Aorta (tissue), 5 donors: ENCODE measurements at regions of chr4 and their contacts with region 1.

Region 1: GRCh38 chr4:147731580-147732517 is at the start of gene ARHGAP10:
- DNase-seq: peak; percentile 86 to 92
- ATAC-seq: peak; percentile 85
- H3K4me3 ChIP-seq: peak within 1 kb of the TSS; percentile 90 to 94
- H3K27ac ChIP-seq: peak within 1 kb of the TSS; percentile 23 to 83
- H3K4me1 ChIP-seq: peaks cover 3 to 5% of the 10 kb centered on the region in 2 donors
- H3K27me3 ChIP-seq: no peaks in the 10 kb centered on the region
- total RNA-seq, gene ARHGAP10: 57.3 to 94.5 TPM

Region 2: GRCh38 chr4:147658501-147658900 is 73.3 kb before region 1 on chr4:
- intact Hi-C with region 1: no loop called
- DNase-seq: no peak
- ATAC-seq: no peak
- H3K4me3 ChIP-seq: no peak overlapping the region
- H3K27ac ChIP-seq: no peak overlapping the region
- H3K4me1 ChIP-seq: no peaks in the 10 kb centered on the region
- H3K27me3 ChIP-seq: no peaks in the 10 kb centered on the region

Region 3: GRCh38 chr4:147755561-147756295 is 23.9 kb after region 1 on chr4:
- intact Hi-C with region 1: loop called in 1 of 2 experiments (anchors 2 kb)
- DNase-seq: no peak
- ATAC-seq: peak; percentile 61
- H3K4me3 ChIP-seq: no peak overlapping the region
- H3K27ac ChIP-seq: peak overlapping the region; percentile 5 to 88
- H3K4me1 ChIP-seq: peaks cover 5 to 7% of the 10 kb centered on the region in 2 donors
- H3K27me3 ChIP-seq: no peaks in the 10 kb centered on the region

Region 4: GRCh38 chr4:147799986-147800555 is 68.2 kb after region 1 on chr4:
- intact Hi-C with region 1: no loop called
- DNase-seq: no peak
- ATAC-seq: no peak
- H3K4me3 ChIP-seq: no peak overlapping the region
- H3K27ac ChIP-seq: no peak overlapping the region
- H3K4me1 ChIP-seq: peaks cover 5 to 14% of the 10 kb centered on the region in 2 donors
- H3K27me3 ChIP-seq: no peaks in the 10 kb centered on the region

Region 5: DNA sequence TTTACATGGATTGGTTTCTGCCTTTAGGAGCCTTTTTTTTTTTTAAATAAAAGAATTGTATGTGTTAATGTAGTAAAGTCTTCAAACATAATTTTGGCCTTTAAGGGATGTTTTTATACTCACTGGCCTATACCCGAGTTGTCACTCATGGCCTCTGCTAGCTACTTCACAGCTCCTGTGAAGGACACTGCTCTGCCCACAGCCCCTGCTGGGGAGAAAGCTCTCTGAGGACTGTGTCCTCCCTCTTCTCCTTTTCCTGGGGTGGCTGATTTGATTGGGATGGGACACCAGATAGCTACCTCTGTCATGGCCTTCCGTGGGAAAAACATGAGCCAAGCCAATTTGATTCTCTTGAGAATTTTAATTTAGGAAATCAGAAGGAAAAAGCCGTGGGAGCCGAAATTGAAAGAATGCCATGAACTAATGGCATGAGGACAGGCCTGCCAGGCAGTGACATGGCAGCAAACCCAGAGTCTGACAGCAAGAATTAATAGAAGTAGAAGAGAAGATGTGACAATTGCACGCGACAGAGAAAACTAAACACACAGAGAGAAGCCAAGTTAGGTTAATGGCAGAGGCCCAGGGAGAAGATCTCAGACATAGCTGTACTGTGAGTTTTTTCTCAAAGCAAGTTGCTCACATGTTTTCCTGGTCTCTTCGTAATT is 81.4 kb after region 1 on chr4:
- intact Hi-C with region 1: loop called in 1 of 2 experiments (anchors 10 kb)
- DNase-seq: no peak
- ATAC-seq: no peak
- H3K4me3 ChIP-seq: no peak overlapping the region
- H3K27ac ChIP-seq: peak overlapping the region; percentile 37 to 87
- H3K4me1 ChIP-seq: peaks cover 11 to 25% of the 10 kb centered on the region in 2 donors
- H3K27me3 ChIP-seq: no peaks in the 10 kb centered on the region

Region 6: DNA sequence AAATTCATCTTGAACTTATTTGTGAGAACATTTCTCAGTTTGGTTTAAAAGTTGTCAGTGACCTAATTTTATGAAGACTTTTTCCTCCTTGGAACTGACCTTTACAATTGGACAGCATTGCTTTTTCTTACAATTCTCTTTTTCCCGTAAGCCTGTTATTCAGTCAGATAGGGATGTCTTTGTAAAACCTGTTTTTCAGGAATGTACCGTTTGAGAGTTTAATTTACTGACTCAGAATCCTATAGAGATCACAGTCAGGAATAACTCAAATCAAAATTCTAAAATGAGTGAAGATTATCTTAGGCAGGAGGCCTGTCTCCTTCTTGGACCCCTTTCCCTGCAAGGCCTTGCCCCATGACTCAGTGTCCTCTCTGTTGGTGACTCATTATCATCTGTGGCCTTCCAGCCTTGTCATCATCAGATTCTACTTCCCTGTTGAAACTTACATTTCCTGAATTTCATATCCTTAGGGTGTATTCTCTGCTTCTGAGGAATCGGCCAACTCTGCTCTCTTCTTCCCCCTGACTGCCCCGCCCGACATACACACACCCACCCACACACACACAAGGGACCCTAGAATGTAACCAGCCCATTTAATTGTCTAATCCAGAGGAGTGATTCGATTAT is 99.8 kb after region 1 on chr4:
- intact Hi-C with region 1: loop called in 1 of 2 experiments (anchors 5 kb)
- DNase-seq: peak in 1 of 2 donors; percentile 53
- ATAC-seq: peak; percentile 51
- H3K4me3 ChIP-seq: no peak overlapping the region
- H3K27ac ChIP-seq: peak overlapping the region; percentile 80 to 92
- H3K4me1 ChIP-seq: peaks cover 9 to 11% of the 10 kb centered on the region in 2 donors
- H3K27me3 ChIP-seq: no peaks in the 10 kb centered on the region